ENCODE measurements at regions of chr6 and their contacts with region 1.

Region 1: DNA sequence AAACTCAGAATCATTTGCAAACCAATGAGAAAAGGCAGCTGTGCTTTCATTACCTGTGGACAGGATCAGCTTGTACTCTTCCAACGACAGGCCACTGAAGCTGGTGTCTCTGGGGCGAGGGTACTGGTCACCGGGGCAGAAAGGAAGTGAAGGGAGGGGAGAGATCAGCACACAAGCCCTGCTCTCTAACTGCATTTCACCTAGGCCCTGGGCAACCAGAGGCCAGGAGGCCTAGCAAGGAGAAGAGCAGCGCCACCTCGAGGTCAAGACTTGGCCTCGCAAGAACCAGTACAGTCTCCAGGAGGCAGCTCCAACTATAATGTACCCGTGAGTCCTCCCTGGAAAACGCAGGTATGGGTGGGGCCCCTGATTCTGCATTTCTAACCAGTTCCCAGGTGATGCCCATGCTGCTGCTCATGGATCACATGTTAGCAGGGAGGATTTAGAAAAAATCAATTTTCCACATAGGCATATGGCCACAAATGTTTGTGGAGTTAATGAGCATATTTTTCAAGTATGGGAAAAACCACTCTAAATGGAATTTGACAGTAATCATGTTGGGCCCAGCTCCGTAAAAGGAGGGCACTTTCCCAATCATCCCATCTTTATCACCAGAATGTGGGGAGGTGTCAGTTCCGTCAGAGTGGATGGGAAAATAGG is 11.0 kb downstream of the UQCC2 start:
- DNase-seq: peak; percentile 84
- H3K4me3 Mint-ChIP-seq: no peak overlapping the region
- H3K27ac Mint-ChIP-seq: peak overlapping the region; percentile 9
- H3K4me1 Mint-ChIP-seq: peaks cover 60% of the 10 kb centered on the region
- H3K27me3 Mint-ChIP-seq: no peaks in the 10 kb centered on the region

Region 2: DNA sequence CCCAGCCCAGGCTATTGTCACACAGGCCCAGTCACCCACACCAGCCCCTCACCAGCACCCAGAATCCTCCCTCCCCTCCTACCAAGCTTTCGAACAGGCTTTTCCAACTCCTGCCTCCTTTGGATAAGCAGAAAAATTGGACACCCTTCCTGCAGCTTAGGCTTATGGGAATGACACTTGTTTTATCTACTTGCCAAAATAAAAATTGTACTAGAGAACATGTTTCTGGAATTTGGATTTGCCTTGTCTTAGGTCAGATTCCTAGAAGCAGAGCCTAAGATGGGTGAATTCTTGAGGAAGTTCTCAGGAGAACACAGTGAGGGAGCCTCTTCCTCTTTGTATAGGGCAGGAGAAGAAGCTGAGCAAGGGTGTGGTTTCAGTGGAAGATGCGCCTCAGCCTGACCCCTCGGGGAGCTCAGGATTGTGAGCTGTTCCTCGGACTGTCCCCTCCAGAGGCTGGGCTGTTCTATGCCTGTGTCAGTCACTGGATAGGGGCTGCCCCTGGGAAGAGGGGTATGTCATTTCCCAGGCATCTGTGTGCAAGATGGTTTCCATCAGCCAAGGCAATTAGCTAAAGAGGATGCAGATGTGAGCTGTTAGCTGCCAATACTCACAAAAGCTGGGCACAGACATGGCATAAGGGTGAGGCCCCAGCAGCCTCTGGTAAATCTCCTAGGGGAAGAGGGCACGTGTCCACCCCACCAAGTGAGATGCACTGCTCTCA is 45.5 kb before region 1 on chr6:
- CTCF ChIA-PET with region 1: no interaction called
- POLR2A ChIA-PET with region 1: no interaction called
- DNase-seq: no peak
- H3K4me3 Mint-ChIP-seq: no peak overlapping the region
- H3K27ac Mint-ChIP-seq: peak overlapping the region; percentile 22
- H3K4me1 Mint-ChIP-seq: peaks cover 11% of the 10 kb centered on the region
- H3K27me3 Mint-ChIP-seq: no peaks in the 10 kb centered on the region

Region 3: GRCh38 chr6:33711140-33712129 is 10.9 kb after region 1 on chr6 and contains the start of gene UQCC2:
- CTCF ChIA-PET with region 1: interaction called, 18 read pairs
- POLR2A ChIA-PET with region 1: interaction called, 5 read pairs
- DNase-seq: peak; percentile 97
- H3K4me3 Mint-ChIP-seq: peak within 1 kb of the TSS; percentile 90
- H3K27ac Mint-ChIP-seq: peak within 1 kb of the TSS; percentile 96
- H3K4me1 Mint-ChIP-seq: peaks cover 38% of the 10 kb centered on the region
- H3K27me3 Mint-ChIP-seq: peaks cover 4% of the 10 kb centered on the region
- total RNA-seq, gene UQCC2: 77.6 to 80.0 TPM

Measured in activated CD4-positive, alpha-beta T cell treated with anti-CD3 and anti-CD28 coated beads, Interleukin-2, amount 10 ng/mL, durations not matched to agents 7 days and 5 days (primary cell).